ENCODE measurements at regions of chr15 and their contacts with region 1.

Region 1: GRCh38 chr15:82999905-83000671 is 11.4 kb downstream of the C15orf40 start:
- DNase-seq: no peak
- ATAC-seq: peak; percentile 93 to 99 (median 94)
- H3K4me3 ChIP-seq: peak overlapping the region in 2 of 3 donors; percentile 23 to 39
- H3K27ac ChIP-seq: peak overlapping the region in 1 of 3 donors; percentile 45
- H3K4me1 ChIP-seq: peaks cover 0 to 6% (median 2%) of the 10 kb centered on the region in 4 donors
- H3K27me3 ChIP-seq: no peaks in the 10 kb centered on the region
- CTCF ChIP-seq: peak; percentile 56 to 80 (median 58)
- POLR2A ChIP-seq: no peak

Region 2: DNA sequence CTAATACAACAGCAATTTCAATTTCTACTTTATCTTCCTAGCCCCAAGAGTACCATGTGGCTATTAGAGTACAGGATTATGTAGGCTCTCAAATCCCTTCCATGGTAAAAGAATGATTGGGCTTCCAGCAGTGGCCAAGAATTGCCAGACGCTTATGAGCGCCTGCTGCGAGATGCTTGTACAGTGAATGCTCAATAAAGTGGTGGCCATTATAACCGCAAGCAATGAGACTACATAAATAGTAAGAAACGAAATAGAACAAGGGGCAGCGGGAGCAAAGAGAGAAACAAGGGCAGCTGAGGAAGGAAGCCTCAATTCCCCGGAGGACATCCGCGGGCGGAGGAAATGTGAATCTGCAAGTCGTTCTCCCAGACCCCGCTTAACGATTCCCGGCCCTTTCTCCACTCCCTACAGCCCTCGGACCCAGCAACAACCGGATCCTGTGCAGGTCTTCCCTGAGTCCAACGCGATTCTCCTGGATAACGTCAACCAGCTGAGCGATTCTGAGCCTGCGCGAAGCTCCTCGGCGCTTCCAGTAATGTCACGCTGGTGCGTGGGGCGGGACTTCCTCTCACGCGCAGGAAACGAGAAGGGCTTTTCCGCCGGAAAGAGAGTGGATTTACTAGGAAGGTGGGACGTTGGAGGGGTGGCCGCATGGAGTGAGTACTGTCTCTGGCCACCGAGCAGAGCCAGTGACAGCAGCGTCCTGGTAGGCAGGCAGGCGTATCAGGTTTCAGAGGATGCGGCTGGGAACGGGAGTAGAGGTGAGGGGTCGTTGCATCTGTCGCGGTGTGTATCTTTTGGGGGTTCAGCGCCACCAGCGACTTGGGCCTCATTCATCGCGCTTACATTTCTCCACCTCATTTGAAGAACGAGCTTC is 249.9 kb before region 1 on chr15:
- intact Hi-C with region 1: loop called in 1 of 2 experiments (anchors 10 kb)
- DNase-seq: peak; percentile 91 to 94 (median 94)
- ATAC-seq: peak; percentile 99 to 100 (median 99)
- H3K4me3 ChIP-seq: peak overlapping the region; percentile 79 to 96 (median 87)
- H3K27ac ChIP-seq: peak overlapping the region; percentile 76 to 82 (median 81)
- H3K4me1 ChIP-seq: peaks cover 0 to 15% (median 3%) of the 10 kb centered on the region in 4 donors
- H3K27me3 ChIP-seq: no peaks in the 10 kb centered on the region
- CTCF ChIP-seq: no peak
- POLR2A ChIP-seq: peak; percentile 85

Region 3: DNA sequence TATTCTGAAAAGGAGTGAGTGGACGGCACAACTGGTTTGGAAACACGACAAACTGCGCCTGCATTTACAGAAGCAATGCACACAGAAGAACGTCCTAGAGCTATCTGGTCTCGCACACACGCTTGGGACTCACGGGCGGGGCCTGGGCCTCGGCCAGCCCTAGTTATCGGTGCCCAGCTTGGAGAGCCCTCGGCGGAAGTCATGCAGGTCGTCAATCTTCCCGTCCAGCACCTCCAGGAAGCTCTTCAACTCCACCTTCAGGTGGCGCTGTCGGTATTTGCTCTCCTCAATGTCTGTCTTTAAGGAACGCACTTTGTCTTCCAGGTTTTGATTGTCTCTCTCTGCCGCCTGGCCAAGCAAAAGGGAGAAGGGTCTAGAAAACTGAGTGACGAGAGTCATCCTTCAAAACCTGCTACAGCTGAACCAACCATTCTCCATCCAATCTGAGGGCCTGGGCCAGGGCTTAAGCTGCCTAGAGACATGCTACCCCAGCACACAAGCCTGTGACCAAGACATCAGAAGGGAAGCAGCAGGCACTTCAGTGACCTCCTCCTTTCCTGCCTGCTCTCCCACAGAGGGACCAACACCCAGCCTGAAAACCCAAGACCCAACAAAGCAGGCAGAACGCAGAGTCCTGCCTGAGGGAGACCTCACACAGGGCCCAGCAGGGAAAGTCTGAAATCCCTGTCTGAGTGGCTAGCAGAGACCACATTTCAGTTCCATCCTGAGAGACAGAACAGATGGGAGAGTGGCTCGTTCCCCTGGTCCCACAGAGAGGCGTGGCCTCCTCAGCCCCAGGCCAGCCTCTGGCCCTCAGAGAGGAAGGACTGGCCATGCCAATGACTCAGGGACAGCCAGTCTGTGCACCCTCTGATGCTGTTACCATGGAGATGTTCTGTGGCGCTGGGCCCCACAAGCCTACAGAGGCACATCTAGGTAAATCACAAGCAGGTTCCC is 150.3 kb before region 1 on chr15:
- intact Hi-C with region 1: loop called in 1 of 2 experiments (anchors 10 kb)
- DNase-seq: peak; percentile 88 to 93 (median 93)
- ATAC-seq: peak; percentile 95 to 98 (median 96)
- H3K4me3 ChIP-seq: no peak overlapping the region
- H3K27ac ChIP-seq: peak overlapping the region; percentile 23 to 86 (median 77)
- H3K4me1 ChIP-seq: peaks cover 0 to 17% (median 10%) of the 10 kb centered on the region in 4 donors
- H3K27me3 ChIP-seq: no peaks in the 10 kb centered on the region
- CTCF ChIP-seq: peak; percentile 69 to 86 (median 78)
- POLR2A ChIP-seq: no peak

Region 4: GRCh38 chr15:83127648-83128047 is 127.6 kb after region 1 on chr15:
- intact Hi-C with region 1: no loop called
- DNase-seq: no peak
- ATAC-seq: no peak
- H3K4me3 ChIP-seq: no peak overlapping the region
- H3K27ac ChIP-seq: no peak overlapping the region
- H3K4me1 ChIP-seq: no peaks in the 10 kb centered on the region
- H3K27me3 ChIP-seq: no peaks in the 10 kb centered on the region
- CTCF ChIP-seq: no peak
- POLR2A ChIP-seq: no peak

Region 5: GRCh38 chr15:83207622-83208411 is 207.7 kb after region 1 on chr15 and contains the start of gene HDGFL3:
- intact Hi-C with region 1: no loop called
- DNase-seq: peak in 2 of 3 donors; percentile 35 to 55
- ATAC-seq: peak; percentile 36 to 67 (median 52)
- H3K4me3 ChIP-seq: peak within 1 kb of the TSS; percentile 44 to 58 (median 49)
- H3K27ac ChIP-seq: peak within 1 kb of the TSS; percentile 31 to 78 (median 48)
- H3K4me1 ChIP-seq: peaks cover 0 to 7% (median 0%) of the 10 kb centered on the region in 4 donors
- H3K27me3 ChIP-seq: peaks cover 0 to 11% of the 10 kb centered on the region in 2 donors
- CTCF ChIP-seq: no peak
- POLR2A ChIP-seq: no peak
- total RNA-seq, gene HDGFL3: 0.70 to 3.3 (median 1.7) TPM